Posterior vena cava (tissue), 2 donors: ENCODE measurements at regions of chr1 and their contacts with region 1.

Region 1: GRCh38 chr1:44263568-44264450 is 50.5 kb downstream of the DMAP1 start:
- DNase-seq: no peak

Region 2: DNA sequence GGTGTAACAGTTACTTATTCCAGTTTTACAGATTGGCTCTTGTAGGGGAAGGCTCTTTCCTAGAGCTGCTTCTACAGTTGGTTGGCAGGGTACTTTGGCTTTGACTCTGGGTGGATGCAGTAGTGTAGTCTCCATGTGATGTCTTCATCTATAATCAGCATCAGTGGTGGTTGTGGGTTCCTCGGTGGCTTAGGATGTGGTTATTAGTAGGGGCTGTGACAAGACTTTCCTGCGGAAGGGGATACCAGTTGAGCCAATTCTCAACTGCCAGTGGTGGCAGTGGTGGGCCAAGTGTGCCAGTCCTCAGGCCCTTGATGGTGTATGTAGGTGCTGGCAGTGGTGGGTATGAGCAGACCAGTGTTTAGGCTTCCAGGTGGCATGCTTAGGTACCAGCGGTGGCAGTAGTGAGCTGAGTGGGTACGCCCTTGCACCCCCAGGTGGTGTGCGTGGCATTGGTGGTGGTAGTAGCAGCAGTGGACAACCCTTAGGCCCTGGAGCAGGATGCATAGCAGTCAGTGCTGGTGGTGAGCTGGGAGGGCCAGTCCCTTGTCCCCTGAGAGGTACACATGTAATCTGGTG is 95.2 kb before region 1 on chr1:
- intact Hi-C with region 1: no loop called
- DNase-seq: no peak

Region 3: GRCh38 chr1:45339789-45340570 is 1076.2 kb after region 1 on chr1 and contains the starts of genes MUTYH and TOE1:
- intact Hi-C with region 1: loop called in 1 of 2 experiments (anchors 5 kb)
- DNase-seq: peak; percentile 98
- total RNA-seq, gene MUTYH: 15.1 to 15.7 TPM
- total RNA-seq, gene TOE1: 5.8 to 7.0 TPM